Activated T-helper 1 cell treated with anti-CD3 and anti-CD28 coated beads, Interleukin-12 subunit alpha, Interleukin-12 subunit beta, Interleukin-2, Interleukin-4 antibody, amounts not matched to agents 30 ng/mL and 10 ng/mL and 1 ng/mL, durations not matched to agents 14 hours and 24 hours and 36 hours (primary cell): ENCODE measurements at regions of chr17 and their contacts with region 1.

Region 1: DNA sequence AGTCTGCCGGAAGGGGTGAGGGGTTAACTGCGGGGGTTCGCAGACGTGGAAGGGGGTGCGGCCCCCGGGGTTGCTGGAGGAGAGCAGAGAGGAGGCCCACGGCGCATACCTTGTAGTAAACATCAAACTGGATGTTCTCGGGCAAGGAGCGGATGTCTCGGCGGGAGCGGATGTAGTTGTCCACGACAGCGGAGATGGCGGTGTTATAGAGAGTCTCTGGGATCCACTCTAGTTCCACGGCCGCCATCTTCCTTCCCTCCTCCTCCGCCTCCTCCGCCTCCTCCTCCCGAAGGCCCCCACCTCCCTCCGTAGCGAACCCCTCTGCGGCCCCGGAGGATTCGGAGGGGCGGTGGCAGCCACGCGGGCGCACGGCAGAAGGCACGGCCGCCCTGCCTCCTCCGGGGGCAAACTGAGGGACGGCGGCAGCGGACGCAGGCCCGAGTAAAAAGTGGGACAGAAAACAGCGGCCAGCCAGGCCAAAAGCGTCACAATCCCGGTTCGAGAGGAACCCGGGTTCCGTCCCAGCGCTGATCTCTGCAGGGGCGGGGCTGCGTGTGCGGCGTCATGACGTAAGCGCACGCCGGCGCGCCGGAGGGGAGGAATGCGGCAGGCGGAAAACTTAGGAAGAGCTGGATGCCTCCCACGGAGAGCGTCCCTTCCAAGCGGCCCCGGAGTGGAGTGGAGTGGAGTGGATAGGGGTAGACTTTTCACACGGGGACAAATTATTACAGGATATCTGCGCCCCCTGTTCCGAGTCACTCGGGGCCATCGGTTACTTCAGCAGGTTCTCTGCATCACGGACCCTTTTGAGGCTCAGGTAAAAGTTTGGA is at the start of gene APPBP2:
- DNase-seq: peak; percentile 69
- H3K4me3 Mint-ChIP-seq: peak within 1 kb of the TSS; percentile 98
- H3K27ac Mint-ChIP-seq: peak within 1 kb of the TSS; percentile 96
- H3K4me1 Mint-ChIP-seq: peaks cover 49% of the 10 kb centered on the region
- H3K27me3 Mint-ChIP-seq: no peaks in the 10 kb centered on the region
- total RNA-seq, gene APPBP2: 23.4 and 28.1 TPM in 2 replicates

Region 2: GRCh38 chr17:60224064-60224463 is 301.8 kb before region 1 on chr17:
- intact Hi-C with region 1: no loop called
- DNase-seq: no peak
- H3K4me3 Mint-ChIP-seq: no peak overlapping the region
- H3K27ac Mint-ChIP-seq: no peak overlapping the region
- H3K4me1 Mint-ChIP-seq: no peaks in the 10 kb centered on the region
- H3K27me3 Mint-ChIP-seq: no peaks in the 10 kb centered on the region

Region 3: DNA sequence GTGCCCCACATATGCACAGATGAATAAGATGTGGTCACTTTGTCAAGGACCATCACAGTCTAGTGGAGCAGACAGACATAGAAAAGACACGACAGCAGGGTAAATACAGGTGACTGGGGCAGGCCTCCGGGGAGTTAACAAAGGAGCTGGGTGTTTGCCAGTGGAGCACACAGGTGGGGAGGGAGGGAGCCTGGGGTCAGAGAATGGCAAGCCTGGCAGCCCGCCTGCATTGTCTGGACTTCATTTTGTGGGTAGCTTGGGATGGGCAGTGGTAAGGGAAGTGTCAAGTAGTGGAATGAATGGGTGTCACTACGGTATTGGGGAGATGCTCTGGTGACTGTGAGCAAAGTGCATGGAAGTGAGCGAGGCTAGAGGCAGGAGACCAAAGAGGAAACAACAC is 94.4 kb before region 1 on chr17:
- intact Hi-C with region 1: no loop called
- DNase-seq: no peak
- H3K4me3 Mint-ChIP-seq: no peak overlapping the region
- H3K27ac Mint-ChIP-seq: no peak overlapping the region
- H3K4me1 Mint-ChIP-seq: no peaks in the 10 kb centered on the region
- H3K27me3 Mint-ChIP-seq: peaks cover 12% of the 10 kb centered on the region

Region 4: GRCh38 chr17:60568561-60568960 is 42.7 kb after region 1 on chr17:
- intact Hi-C with region 1: loop called (anchors 2 kb)
- DNase-seq: no peak
- H3K4me3 Mint-ChIP-seq: no peak overlapping the region
- H3K27ac Mint-ChIP-seq: no peak overlapping the region
- H3K4me1 Mint-ChIP-seq: no peaks in the 10 kb centered on the region
- H3K27me3 Mint-ChIP-seq: peaks cover 13% of the 10 kb centered on the region

Region 5: DNA sequence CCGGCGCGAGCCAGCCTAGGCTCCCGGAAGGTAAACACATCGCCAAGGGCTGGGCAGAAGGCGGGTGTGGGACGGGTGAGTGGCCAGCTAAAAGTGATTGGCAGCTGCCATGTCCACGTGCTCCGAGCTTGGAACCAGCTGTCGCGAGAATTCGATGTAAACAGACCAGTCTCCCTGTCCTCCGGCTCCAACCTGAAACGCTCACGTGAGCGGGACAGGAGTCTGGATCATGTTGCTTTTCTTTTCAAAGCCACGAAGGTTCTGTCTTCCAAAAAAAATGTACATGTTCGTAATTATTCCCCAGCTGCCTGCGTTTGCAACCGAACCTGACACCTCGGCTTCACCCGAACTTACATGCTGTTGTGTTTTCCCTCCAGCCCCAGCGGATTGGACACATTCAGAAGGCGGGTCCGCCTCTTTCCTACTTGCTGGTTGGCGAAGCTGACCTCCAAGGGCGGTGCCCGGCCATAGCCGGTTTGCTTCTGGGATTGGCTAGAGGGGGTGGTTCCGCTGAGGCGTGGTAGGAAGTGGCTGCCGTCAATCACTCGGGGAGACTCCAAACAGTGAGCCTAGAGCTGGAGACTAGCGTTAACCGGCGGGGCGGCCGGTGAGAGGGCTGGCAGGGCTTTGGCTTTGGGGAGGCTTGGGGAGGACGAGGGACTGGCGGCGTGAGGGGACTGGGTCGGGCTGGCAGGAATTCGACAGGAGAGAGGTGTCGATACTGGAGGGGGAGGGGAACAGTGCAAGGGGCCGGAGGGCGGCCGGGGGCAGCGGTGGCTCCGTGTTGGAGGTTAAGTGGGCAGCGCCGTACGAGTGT is 151.6 kb after region 1 on chr17 and contains the start of gene BCAS3:
- intact Hi-C with region 1: loop called (anchors 1 kb)
- DNase-seq: peak; percentile 97
- H3K4me3 Mint-ChIP-seq: peak within 1 kb of the TSS; percentile 89
- H3K27ac Mint-ChIP-seq: peak within 1 kb of the TSS; percentile 62
- H3K4me1 Mint-ChIP-seq: peaks cover 19% of the 10 kb centered on the region
- H3K27me3 Mint-ChIP-seq: no peaks in the 10 kb centered on the region
- total RNA-seq, gene BCAS3: 8.3 and 8.5 TPM in 2 replicates